OCI-LY7 (cell line): ENCODE measurements at regions of chr7 and their contacts with region 1.

Region 1: DNA sequence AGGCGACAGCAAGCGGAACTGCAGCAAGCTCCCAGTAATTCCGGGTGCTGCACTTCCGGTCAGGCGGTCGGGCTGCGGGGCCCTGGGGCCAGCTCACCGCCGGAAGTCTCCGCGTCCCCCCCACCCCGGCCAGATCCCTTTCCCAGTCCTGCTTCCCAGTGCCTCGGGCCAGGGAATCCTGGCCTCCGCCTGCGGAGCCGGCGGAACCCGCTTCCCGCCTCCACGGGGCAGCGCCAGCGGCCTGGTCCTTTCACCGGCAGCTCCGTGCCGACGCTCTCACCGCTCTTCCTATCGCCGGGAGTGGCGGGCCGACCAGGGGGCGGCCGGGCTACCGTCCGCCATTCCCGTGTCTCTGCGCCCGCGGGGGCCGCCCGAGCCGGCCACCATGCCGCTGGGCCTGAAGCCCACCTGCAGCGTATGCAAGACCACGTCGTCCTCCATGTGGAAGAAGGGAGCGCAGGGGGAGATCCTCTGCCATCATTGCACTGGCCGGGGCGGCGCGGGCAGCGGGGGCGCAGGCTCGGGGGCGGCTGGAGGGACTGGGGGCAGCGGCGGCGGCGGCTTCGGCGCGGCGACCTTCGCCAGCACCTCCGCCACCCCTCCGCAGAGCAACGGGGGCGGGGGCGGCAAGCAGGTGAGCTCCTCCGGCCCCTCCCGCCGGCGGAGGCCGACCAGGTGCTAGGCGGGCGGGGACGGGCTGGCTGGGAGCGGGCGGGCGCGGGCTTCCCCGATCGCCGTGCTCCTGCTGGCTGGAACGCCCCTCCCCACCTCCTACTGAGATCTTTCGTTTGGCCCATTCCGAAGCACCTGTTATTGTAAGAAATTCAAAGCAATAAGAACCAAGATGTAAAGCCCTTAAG is at the start of gene GATAD1:
- DNase-seq: peak; percentile 92
- H3K4me3 ChIP-seq: peak within 1 kb of the TSS; percentile 90
- H3K27ac ChIP-seq: peak within 1 kb of the TSS; percentile 68
- H3K4me1 ChIP-seq: peaks cover 5% of the 10 kb centered on the region
- CTCF ChIP-seq: peak; percentile 86
- total RNA-seq, gene GATAD1: 15.5 and 19.6 TPM in 2 replicates

Region 2: DNA sequence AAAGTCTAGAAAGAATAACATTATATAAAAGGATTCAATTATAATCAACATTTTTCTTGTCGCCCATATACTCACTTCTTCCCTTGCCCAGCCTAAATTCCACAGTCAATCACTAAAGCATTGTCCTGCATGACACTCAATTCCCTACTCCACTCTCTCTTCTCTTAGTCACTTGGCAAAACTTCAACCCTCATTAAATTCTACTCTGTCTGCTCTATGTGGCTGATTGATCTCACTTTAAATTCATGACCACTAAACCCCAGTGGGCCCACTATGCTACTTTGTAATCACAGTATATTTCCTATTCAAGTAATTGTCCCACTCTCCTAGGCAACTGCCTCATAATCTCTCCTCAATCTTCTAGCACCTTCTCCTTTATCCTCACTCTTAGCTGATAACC is 621.2 kb before region 1 on chr7:
- CTCF ChIA-PET with region 1: no interaction called
- POLR2A ChIA-PET with region 1: interaction called, 3 read pairs
- intact Hi-C with region 1: loop called (anchors 1 kb)
- DNase-seq: no peak
- H3K4me3 ChIP-seq: no peak overlapping the region
- H3K27ac ChIP-seq: no peak overlapping the region
- H3K4me1 ChIP-seq: no peaks in the 10 kb centered on the region
- CTCF ChIP-seq: no peak

Region 3: DNA sequence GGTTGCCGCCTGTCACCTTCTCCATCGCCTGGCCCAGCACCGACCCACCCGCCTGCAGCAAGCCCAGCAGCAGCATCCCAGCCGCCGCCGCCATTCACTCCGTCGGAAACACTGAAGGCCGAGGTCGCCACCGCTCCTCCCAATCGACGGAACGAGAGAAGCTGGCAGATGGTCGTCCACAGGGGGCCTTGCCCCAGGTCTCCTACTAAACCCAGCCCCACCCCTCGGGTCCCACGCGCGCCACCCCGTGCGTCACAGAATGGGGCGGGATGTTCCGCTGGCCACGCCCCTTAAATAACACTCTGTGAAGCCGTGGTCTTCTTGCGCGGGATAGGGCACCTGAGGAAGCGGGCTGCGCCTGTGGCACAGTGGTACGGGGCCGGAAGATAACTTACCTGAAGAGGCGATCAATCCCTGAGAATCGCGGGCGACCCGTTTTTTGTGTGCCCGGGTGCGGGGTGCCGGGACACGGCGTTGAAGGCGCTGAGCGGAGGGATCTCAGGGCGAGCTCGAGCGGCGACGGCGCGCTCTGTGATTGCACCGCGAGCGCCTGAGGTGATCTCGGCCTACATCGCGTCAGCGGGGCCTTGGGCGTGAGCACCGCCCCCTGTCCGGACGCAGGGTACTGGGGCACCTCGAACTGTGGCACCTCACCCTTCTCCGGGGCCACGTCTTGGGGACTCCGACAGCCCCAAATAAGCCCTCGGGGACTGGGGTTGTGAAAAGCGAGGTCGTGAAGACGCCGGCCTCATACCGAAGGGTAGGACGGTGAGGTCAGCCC is 313.1 kb before region 1 on chr7 and contains the start of gene CYP51A1:
- CTCF ChIA-PET with region 1: no interaction called
- POLR2A ChIA-PET with region 1: interaction called, 3 read pairs
- intact Hi-C with region 1: loop called (anchors 1 kb)
- DNase-seq: peak; percentile 94
- H3K4me3 ChIP-seq: peak within 1 kb of the TSS; percentile 92
- H3K27ac ChIP-seq: peak within 1 kb of the TSS; percentile 68
- H3K4me1 ChIP-seq: peaks cover 40% of the 10 kb centered on the region
- CTCF ChIP-seq: 0 out of 2 replicates have a peak, but pooled peaks have one; percentile 22
- total RNA-seq, gene CYP51A1: 51.7 and 53.4 TPM in 2 replicates

Region 4: DNA sequence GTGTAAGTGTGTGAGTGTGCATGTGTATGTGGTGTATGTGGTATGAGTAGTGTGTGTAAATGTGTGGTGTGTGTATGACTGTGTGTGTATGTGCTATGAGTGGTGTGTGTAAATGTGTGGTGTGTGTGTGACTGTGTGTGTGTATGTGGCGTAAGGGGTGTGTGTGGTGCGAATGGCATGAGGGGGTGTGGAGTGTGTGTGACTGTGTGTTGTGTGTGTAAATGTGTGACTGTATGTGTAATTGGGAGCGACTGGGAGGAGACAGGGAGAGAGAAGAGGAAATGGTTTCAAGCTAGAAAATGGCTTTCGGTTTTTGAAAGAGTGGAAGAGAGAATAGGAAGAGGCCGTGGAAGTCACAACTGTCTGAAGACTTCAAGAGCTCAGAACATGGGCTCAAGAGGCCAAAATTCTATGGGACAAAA is 23.9 kb before region 1 on chr7:
- CTCF ChIA-PET with region 1: interaction called, 8 read pairs
- POLR2A ChIA-PET with region 1: interaction called, 10 read pairs
- intact Hi-C with region 1: loop called (anchors 1 kb)
- DNase-seq: no peak
- H3K4me3 ChIP-seq: no peak overlapping the region
- H3K27ac ChIP-seq: no peak overlapping the region
- H3K4me1 ChIP-seq: peaks cover 5% of the 10 kb centered on the region
- CTCF ChIP-seq: no peak